ENCODE measurements at regions of chr10 and their contacts with region 1.

Region 1: GRCh38 chr10:31490858-31491504 is 172.0 kb downstream of the ZEB1 start:
- DNase-seq: no peak
- ATAC-seq: peak in 3 of 4 donors; percentile 53 to 73 (median 53)
- H3K4me3 ChIP-seq: no peak overlapping the region
- H3K27ac ChIP-seq: no peak overlapping the region
- H3K4me1 ChIP-seq: peaks cover 0 to 4% (median 0%) of the 10 kb centered on the region in 12 donors
- H3K27me3 ChIP-seq: no peaks in the 10 kb centered on the region
- CTCF ChIP-seq: peak; percentile 38 to 70 (median 57)
- POLR2A ChIP-seq: no peak

Region 2: DNA sequence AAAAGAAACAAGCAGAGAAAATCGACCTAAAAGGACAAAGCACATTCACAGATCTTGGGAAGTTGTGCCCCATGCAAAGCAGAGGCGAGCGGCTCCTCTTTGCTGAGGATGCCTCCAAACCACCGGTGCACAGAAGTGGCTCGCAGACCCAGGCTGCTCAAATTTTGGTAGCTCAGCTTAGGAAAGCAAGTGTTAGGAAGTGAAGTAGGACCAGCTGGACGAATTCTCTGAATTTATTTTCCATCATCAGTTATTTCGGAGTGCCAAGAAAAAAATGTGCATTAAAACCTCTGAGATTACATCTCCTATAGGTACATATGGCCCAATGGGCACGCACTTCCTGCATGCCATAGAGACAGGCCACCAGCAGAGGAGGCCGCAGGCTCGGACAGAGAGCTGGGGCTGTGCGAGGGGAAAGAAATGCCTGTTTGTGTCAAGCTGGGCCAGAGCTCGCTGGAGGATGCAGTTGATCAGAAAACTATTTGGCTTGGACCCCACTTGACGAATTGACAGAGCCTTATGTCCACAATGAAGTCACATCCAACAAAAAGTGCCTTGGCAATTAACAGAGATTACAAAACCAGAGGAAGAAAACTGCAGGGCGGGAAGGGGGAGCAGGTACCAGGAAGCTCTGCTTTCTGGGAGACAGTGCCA is 739.2 kb before region 1 on chr10:
- intact Hi-C with region 1: loop called in 1 of 10 experiments (anchors 10 kb)
- DNase-seq: peak in 4 of 5 donors; percentile 69 to 84 (median 80)
- ATAC-seq: peak; percentile 64 to 87 (median 77)
- H3K4me3 ChIP-seq: no peak overlapping the region
- H3K27ac ChIP-seq: peak overlapping the region in 9 of 12 donors; percentile 3 to 68 (median 34)
- H3K4me1 ChIP-seq: peaks cover 0 to 23% (median 6%) of the 10 kb centered on the region in 12 donors
- H3K27me3 ChIP-seq: no peaks in the 10 kb centered on the region
- CTCF ChIP-seq: peak in 11 of 12 donors; percentile 12 to 97 (median 91)
- POLR2A ChIP-seq: no peak

Region 3: DNA sequence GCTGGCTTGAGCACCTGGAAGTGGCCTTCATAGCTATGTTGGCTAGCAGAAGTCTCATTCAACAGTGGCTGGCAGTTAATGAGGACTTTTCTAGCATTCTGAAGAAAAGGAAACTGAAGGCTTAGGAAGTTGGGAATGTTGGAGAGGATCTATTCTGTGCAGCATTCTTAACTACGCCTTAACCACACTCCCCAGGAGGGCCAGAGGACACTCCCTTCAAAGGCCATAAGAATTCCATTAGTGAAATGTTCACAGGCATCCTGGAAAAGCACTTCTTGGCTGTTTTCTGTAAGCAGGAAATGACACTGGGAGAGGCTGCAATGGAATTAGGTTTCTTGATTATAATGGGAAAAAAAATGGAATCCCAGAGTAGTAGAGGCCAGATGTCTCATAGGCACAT is 248.7 kb after region 1 on chr10:
- intact Hi-C with region 1: no loop called
- DNase-seq: peak in 1 of 5 donors; percentile 47
- ATAC-seq: peak; percentile 61 to 96 (median 91)
- H3K4me3 ChIP-seq: no peak overlapping the region
- H3K27ac ChIP-seq: peak overlapping the region in 11 of 12 donors; percentile 12 to 81 (median 74)
- H3K4me1 ChIP-seq: peaks cover 0 to 18% (median 11%) of the 10 kb centered on the region in 12 donors
- H3K27me3 ChIP-seq: no peaks in the 10 kb centered on the region
- CTCF ChIP-seq: no peak
- POLR2A ChIP-seq: no peak